CD4-positive, alpha-beta memory T cell (primary cell): ENCODE measurements at regions of chr1 and their contacts with region 1.

Region 1: GRCh38 chr1:194233069-194233468 is 1046.7 kb upstream of the B3GALT2 start:
- DNase-seq: no peak
- H3K4me3 ChIP-seq: no peak overlapping the region
- H3K4me3 Mint-ChIP-seq: no peak overlapping the region
- H3K27ac ChIP-seq: no peak overlapping the region
- H3K27ac Mint-ChIP-seq: no peak overlapping the region
- H3K4me1 ChIP-seq: no peaks in the 10 kb centered on the region
- H3K4me1 Mint-ChIP-seq: peaks cover 0 to 9% (median 2%) of the 10 kb centered on the region in 4 donors
- H3K27me3 ChIP-seq: no peaks in the 10 kb centered on the region
- H3K27me3 Mint-ChIP-seq: no peaks in the 10 kb centered on the region

Region 2: DNA sequence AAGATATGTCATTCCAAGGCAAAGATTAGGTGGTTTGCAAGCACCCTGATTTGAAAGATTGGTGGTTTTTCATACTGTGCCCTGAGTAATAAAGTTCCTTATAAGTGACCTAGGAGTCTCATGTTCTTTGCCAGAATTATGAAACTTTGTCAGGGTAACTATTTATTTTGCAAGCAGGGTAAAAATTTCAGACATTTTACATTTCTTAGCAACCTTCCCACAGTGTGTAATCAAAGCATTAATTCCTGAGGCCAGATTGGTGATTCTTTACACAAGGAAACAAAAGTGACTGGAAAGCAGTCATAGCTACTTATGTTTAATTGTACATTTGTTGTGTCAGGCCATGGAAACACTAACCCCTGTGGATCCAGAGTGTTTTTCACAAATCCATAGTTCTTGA is 48.6 kb before region 1 on chr1:
- CTCF ChIA-PET with region 1: interaction called, 3 read pairs
- POLR2A ChIA-PET with region 1: no interaction called
- intact Hi-C with region 1: loop called (anchors 10 kb)
- DNase-seq: no peak
- H3K4me3 ChIP-seq: no peak overlapping the region
- H3K4me3 Mint-ChIP-seq: no peak overlapping the region
- H3K27ac ChIP-seq: no peak overlapping the region
- H3K27ac Mint-ChIP-seq: no peak overlapping the region
- H3K4me1 ChIP-seq: no peaks in the 10 kb centered on the region
- H3K4me1 Mint-ChIP-seq: no peaks in the 10 kb centered on the region
- H3K27me3 ChIP-seq: no peaks in the 10 kb centered on the region
- H3K27me3 Mint-ChIP-seq: no peaks in the 10 kb centered on the region